Activated naive CD4-positive, alpha-beta T cell treated with anti-CD3 and anti-CD28 coated beads for 36 hours (primary cell): ENCODE measurements at regions of chr17 and their contacts with region 1.

Region 1: GRCh38 chr17:42997984-42998938 is at the start of gene RPL27:
- DNase-seq: peak; percentile 99
- H3K4me3 Mint-ChIP-seq: peak within 1 kb of the TSS; percentile 97
- H3K27ac Mint-ChIP-seq: peak within 1 kb of the TSS; percentile 97
- H3K4me1 Mint-ChIP-seq: peaks cover 34% of the 10 kb centered on the region
- H3K27me3 Mint-ChIP-seq: no peaks in the 10 kb centered on the region
- total RNA-seq, gene RPL27: 1,974 to 2,033 TPM

Region 2: GRCh38 chr17:42422412-42422957 is 575.8 kb before region 1 on chr17:
- CTCF ChIA-PET with region 1: no interaction called
- intact Hi-C with region 1: no loop called
- DNase-seq: peak; percentile 46
- H3K4me3 Mint-ChIP-seq: peak overlapping the region; percentile 71
- H3K27ac Mint-ChIP-seq: no peak overlapping the region
- H3K4me1 Mint-ChIP-seq: peaks cover 9% of the 10 kb centered on the region
- H3K27me3 Mint-ChIP-seq: peaks cover 20% of the 10 kb centered on the region

Region 3: DNA sequence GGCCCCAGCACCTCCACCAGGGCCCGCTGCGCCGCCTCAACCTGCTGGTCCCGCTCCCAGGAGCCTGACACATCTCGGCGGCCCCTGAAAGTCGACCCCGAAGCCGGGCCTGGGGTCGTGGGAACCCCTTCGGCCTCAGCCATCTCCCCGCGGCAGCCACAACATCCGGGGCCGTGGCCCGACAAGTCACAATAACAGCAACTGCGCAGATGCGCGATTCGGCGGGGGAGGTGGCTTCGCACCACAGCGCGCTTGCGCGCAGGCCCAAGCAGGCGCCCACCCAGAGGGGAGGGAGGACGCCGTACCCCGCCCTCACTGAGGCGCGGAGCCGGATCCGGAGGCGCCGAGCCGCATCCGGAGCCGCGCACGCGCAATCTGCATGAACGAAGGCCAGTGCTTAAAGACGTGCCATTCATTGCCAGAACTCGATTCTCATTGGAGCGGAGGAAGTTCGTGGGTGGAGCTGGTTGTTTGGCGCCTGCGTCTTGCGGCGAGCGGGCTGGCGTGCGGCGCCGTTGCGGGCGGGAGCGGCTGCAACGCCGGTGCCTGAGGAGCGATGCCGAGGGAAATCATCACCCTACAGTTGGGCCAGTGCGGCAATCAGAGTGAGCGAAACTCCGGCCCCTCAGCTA is 389.0 kb before region 1 on chr17 and contains the starts of genes RETREG3 and TUBG1:
- CTCF ChIA-PET with region 1: no interaction called
- intact Hi-C with region 1: loop called (anchors 2 kb)
- DNase-seq: peak; percentile 99
- H3K4me3 Mint-ChIP-seq: peak within 1 kb of the TSS; percentile 100
- H3K27ac Mint-ChIP-seq: peak within 1 kb of the TSS; percentile 93
- H3K4me1 Mint-ChIP-seq: peaks cover 45% of the 10 kb centered on the region
- H3K27me3 Mint-ChIP-seq: no peaks in the 10 kb centered on the region
- total RNA-seq, gene RETREG3: 28.6 to 33.5 TPM
- total RNA-seq, gene TUBG1: 91.3 to 92.0 TPM

Region 4: GRCh38 chr17:42744806-42745617 is 253.2 kb before region 1 on chr17 and contains the start of gene EZH1:
- CTCF ChIA-PET with region 1: no interaction called
- intact Hi-C with region 1: loop called (anchors 1 kb)
- DNase-seq: peak; percentile 93
- H3K4me3 Mint-ChIP-seq: peak within 1 kb of the TSS; percentile 90
- H3K27ac Mint-ChIP-seq: peak within 1 kb of the TSS; percentile 93
- H3K4me1 Mint-ChIP-seq: peaks cover 21% of the 10 kb centered on the region
- H3K27me3 Mint-ChIP-seq: peaks cover 6% of the 10 kb centered on the region
- total RNA-seq, gene EZH1: 31.9 to 34.0 TPM

Region 5: DNA sequence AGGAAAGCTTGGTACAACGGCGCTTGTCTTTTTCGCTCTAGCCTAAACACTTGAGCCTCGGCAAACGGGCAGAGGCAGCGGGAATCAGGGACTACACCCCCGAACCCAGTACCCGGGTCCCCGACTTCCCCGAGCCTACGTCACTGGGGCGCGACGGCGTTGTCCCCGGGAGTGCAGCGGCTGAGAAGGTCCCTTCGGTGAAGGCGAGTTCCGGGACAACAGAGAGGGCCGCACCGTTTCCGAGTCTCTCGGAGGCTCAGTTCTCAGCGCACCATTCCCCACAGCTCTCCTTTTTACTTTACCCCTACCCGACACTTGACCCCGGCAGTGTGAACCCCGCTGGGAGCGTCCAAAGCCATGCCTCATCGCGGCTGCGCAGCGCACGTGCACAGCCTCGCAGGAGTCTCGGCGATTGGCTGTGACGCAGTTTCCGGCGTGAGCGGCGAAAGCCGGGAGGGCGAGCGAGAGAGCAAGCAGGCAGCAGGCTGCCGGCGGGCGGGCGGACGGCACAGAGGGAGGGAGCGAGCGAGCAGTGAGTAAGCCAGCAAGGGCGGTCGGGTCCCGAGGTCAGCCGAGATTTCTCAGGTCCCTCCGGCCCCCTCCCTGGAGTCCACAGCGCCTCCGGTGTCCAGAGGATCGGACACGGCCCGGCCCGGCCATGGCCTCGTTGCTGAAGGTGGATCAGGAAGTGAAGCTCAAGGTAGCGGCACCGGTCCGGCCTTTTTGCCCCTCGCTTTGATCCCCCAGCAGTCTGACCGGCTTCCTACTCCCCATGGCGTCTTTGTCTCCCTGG is 165.1 kb before region 1 on chr17 and contains the start of gene PSME3:
- CTCF ChIA-PET with region 1: interaction called, 4 read pairs
- intact Hi-C with region 1: loop called (anchors 1 kb)
- DNase-seq: peak; percentile 92
- H3K4me3 Mint-ChIP-seq: peak within 1 kb of the TSS; percentile 95
- H3K27ac Mint-ChIP-seq: peak within 1 kb of the TSS; percentile 97
- H3K4me1 Mint-ChIP-seq: peaks cover 22% of the 10 kb centered on the region
- H3K27me3 Mint-ChIP-seq: no peaks in the 10 kb centered on the region
- total RNA-seq, gene PSME3: 84.7 to 87.0 TPM

Region 6: DNA sequence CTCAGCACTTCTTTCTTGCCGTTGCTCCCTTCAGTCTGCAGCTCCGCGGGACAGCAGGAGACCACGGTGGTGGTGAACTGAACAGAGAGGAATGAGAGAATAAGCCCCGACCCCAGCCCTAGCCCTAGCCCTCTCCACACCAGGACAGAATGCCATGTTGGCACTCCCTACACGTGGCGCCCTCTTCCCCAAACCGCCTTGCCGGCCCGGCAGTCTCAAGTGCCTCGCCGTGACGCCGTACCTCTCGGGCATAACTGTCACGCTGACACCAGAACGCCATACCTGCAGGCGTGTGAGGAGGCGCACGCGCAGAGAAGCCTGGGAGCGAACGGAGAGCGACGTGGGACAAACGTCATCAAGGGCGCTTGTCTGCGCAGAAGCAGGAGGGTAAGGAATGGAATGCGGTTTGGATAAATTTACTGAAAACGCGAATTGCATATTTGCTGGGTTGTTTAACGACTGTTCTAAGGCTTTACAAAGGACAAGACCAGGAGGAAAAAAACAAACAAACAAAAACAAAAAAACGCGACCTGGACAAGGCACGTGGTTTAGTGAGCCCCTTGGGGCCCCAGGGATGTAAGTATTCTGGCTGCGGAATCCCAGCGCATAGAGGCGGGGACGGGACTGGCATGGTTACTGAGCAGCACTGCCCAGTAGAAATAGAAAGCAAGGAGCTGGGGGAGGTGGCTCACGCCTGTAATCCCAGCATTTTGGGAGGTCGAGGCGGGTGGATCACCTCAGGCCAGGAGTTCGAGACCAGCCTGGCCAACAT is 33.9 kb before region 1 on chr17 and contains the start of gene AARSD1:
- CTCF ChIA-PET with region 1: interaction called, 5 read pairs
- intact Hi-C with region 1: loop called (anchors 1 kb)
- DNase-seq: peak; percentile 96
- H3K4me3 Mint-ChIP-seq: peak within 1 kb of the TSS; percentile 97
- H3K27ac Mint-ChIP-seq: peak within 1 kb of the TSS; percentile 91
- H3K4me1 Mint-ChIP-seq: peaks cover 21% of the 10 kb centered on the region
- H3K27me3 Mint-ChIP-seq: no peaks in the 10 kb centered on the region
- total RNA-seq, gene AARSD1: 48.4 to 49.3 TPM

Region 7: GRCh38 chr17:43125133-43125966 is 127.1 kb after region 1 on chr17 and contains the start of gene BRCA1:
- CTCF ChIA-PET with region 1: no interaction called
- intact Hi-C with region 1: loop called (anchors 1 kb)
- DNase-seq: peak; percentile 99
- H3K4me3 Mint-ChIP-seq: peak within 1 kb of the TSS; percentile 100
- H3K27ac Mint-ChIP-seq: peak within 1 kb of the TSS; percentile 99
- H3K4me1 Mint-ChIP-seq: peaks cover 39% of the 10 kb centered on the region
- H3K27me3 Mint-ChIP-seq: no peaks in the 10 kb centered on the region
- total RNA-seq, gene BRCA1: 77.4 to 80.6 TPM

Region 8: DNA sequence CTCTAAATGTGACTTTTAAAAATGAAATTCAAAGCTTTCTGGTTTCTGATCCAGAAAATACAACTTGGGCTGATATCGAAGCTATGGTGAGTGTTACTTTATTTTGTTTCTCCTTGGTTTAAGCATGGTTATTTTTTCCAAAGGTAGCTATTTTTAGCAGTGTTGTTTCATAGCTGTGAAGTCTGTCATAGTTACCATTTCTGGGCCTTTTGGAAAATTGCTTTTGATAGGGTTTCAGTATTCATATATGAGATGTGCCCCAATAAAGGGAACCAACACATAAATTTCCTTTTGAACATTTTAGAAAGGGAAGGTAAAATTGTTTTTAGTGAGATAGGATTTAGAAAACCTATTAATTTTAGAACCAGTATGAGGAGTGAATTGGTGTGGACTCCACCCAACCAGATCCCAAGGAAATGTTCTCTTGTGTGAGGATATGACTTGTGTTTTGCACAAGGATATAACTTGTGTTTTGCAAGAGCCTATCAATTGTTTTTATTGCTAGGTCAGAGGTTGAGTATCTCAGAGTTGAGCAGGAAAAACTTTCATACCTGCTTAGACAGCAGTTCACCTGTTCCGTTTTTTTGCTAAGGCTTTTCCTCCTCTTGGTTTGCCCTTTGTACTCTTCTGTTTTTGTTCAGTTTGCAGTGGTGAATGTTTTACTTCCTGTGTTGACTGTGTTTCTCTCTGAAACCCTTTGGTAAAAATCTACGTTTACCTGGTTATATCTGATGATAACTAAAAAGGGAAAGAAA is 177.7 kb after region 1 on chr17:
- CTCF ChIA-PET with region 1: no interaction called
- intact Hi-C with region 1: no loop called
- DNase-seq: no peak
- H3K4me3 Mint-ChIP-seq: peak overlapping the region; percentile 30
- H3K27ac Mint-ChIP-seq: peak overlapping the region; percentile 82
- H3K4me1 Mint-ChIP-seq: peaks cover 50% of the 10 kb centered on the region
- H3K27me3 Mint-ChIP-seq: no peaks in the 10 kb centered on the region

Region 9: GRCh38 chr17:43211480-43212402 is 213.5 kb after region 1 on chr17 and contains the start of gene TMEM106A:
- CTCF ChIA-PET with region 1: no interaction called
- intact Hi-C with region 1: loop called (anchors 5 kb)
- DNase-seq: peak; percentile 82
- H3K4me3 Mint-ChIP-seq: peak within 1 kb of the TSS; percentile 94
- H3K27ac Mint-ChIP-seq: peak within 1 kb of the TSS; percentile 90
- H3K4me1 Mint-ChIP-seq: peaks cover 26% of the 10 kb centered on the region
- H3K27me3 Mint-ChIP-seq: no peaks in the 10 kb centered on the region
- total RNA-seq, gene TMEM106A: 5.8 to 7.1 TPM

Region 10: GRCh38 chr17:43338886-43339516 is 340.7 kb after region 1 on chr17:
- CTCF ChIA-PET with region 1: no interaction called
- intact Hi-C with region 1: no loop called
- DNase-seq: peak; percentile 82
- H3K4me3 Mint-ChIP-seq: no peak overlapping the region
- H3K27ac Mint-ChIP-seq: no peak overlapping the region
- H3K4me1 Mint-ChIP-seq: peaks cover 31% of the 10 kb centered on the region
- H3K27me3 Mint-ChIP-seq: no peaks in the 10 kb centered on the region